ENCODE measurements at regions of chr9 and their contacts with region 1.

Region 1: GRCh38 chr9:38371495-38371894 is 21.0 kb upstream of the ALDH1B1 start:
- DNase-seq: peak; percentile 63
- ATAC-seq: peak; percentile 93
- H3K4me3 ChIP-seq: no peak overlapping the region
- H3K27ac ChIP-seq: no peak overlapping the region
- H3K4me1 ChIP-seq: no peaks in the 10 kb centered on the region
- H3K27me3 ChIP-seq: no peaks in the 10 kb centered on the region
- CTCF ChIP-seq: peak; percentile 70

Region 2: DNA sequence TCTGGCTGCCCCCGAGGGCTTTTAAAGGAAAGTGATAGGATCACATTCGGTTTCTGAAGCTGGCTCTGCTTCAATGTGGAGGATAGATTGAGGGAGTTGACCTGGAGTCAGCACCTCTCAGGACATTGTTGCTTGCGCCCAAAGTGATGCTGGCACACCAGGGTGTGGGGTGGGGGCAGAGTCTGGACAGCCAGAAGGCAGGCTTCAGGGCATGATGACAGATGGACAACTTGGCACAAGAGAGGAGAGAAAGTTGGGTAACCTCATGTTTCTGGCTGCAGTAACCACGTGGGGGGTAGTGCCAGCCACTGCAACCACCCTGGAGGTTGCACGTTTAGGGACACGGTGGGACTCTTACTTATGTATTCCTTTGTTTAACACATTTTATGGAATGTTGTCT is 30.5 kb after region 1 on chr9:
- CTCF ChIA-PET with region 1: no interaction called
- POLR2A ChIA-PET with region 1: no interaction called
- intact Hi-C with region 1: loop called (anchors 2 kb)
- DNase-seq: no peak
- ATAC-seq: no peak
- H3K4me3 ChIP-seq: no peak overlapping the region
- H3K27ac ChIP-seq: no peak overlapping the region
- H3K4me1 ChIP-seq: no peaks in the 10 kb centered on the region
- H3K27me3 ChIP-seq: 0 out of 2 replicates have a peak, but pooled peaks cover 4% of the 10 kb centered on the region
- CTCF ChIP-seq: no peak